Activated naive CD4-positive, alpha-beta T cell treated with anti-CD3 and anti-CD28 coated beads for 36 hours (primary cell): ENCODE measurements at regions of chr13 and their contacts with region 1.

Region 1: GRCh38 chr13:27251166-27252091 is at the start of gene RPL21:
- DNase-seq: peak; percentile 94
- H3K4me3 Mint-ChIP-seq: peak within 1 kb of the TSS; percentile 99
- H3K27ac Mint-ChIP-seq: peak within 1 kb of the TSS; percentile 99
- H3K4me1 Mint-ChIP-seq: peaks cover 43% of the 10 kb centered on the region
- H3K27me3 Mint-ChIP-seq: no peaks in the 10 kb centered on the region
- total RNA-seq, gene RPL21: 1,766 to 1,839 TPM

Region 2: GRCh38 chr13:25301347-25302047 is 1949.9 kb before region 1 on chr13 and contains the start of gene NUP58:
- CTCF ChIA-PET with region 1: no interaction called
- intact Hi-C with region 1: loop called (anchors 5 kb)
- DNase-seq: peak; percentile 96
- H3K4me3 Mint-ChIP-seq: peak within 1 kb of the TSS; percentile 94
- H3K27ac Mint-ChIP-seq: peak within 1 kb of the TSS; percentile 93
- H3K4me1 Mint-ChIP-seq: peaks cover 40% of the 10 kb centered on the region
- H3K27me3 Mint-ChIP-seq: no peaks in the 10 kb centered on the region
- total RNA-seq, gene NUP58: 91.9 to 93.0 TPM

Region 3: GRCh38 chr13:27130979-27131623 is 120.3 kb before region 1 on chr13:
- CTCF ChIA-PET with region 1: no interaction called
- intact Hi-C with region 1: loop called (anchors 1 kb)
- DNase-seq: peak; percentile 89
- H3K4me3 Mint-ChIP-seq: no peak overlapping the region
- H3K27ac Mint-ChIP-seq: peak overlapping the region; percentile 91
- H3K4me1 Mint-ChIP-seq: peaks cover 88% of the 10 kb centered on the region
- H3K27me3 Mint-ChIP-seq: no peaks in the 10 kb centered on the region

Region 4: DNA sequence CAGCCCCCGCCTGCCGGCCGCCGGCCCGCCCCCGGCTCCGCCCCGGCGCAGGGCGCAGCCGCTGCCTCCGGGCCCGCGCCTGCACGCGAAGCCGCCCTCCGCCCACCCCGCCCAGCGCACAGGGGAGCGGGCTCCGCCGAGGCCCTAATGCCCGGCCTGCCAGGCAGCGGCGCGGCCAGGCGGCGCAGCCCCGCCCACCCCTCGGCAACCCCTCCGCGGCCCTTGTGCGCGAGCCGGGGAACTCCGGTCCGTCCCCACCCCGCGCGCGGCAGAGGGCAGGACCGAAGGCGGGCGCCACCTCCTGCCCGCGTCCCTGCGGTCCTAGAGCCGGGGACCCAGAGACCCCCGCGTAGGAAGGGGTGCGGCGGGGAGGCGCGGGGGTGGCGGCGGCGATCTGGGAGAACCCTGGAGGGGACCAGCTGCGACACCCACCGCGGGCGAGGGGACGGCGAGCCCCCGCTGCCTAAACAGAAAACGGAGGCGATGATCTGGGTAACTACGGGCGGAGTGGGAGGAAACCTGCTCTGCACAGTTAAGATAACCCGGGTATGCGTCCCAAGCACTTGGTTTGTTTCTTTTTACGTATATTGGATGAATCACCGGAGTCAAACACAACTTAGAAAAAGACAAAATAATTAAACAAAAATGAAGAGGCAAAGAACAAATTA is 79.5 kb before region 1 on chr13:
- CTCF ChIA-PET with region 1: no interaction called
- intact Hi-C with region 1: loop called (anchors 1 kb)
- DNase-seq: peak; percentile 79
- H3K4me3 Mint-ChIP-seq: peak overlapping the region; percentile 81
- H3K27ac Mint-ChIP-seq: peak overlapping the region; percentile 81
- H3K4me1 Mint-ChIP-seq: peaks cover 61% of the 10 kb centered on the region
- H3K27me3 Mint-ChIP-seq: no peaks in the 10 kb centered on the region

Region 5: GRCh38 chr13:27339299-27339698 is 87.9 kb after region 1 on chr13:
- CTCF ChIA-PET with region 1: interaction called, 3 read pairs
- intact Hi-C with region 1: loop called (anchors 2 kb)
- DNase-seq: peak; percentile 65
- H3K4me3 Mint-ChIP-seq: no peak overlapping the region
- H3K27ac Mint-ChIP-seq: no peak overlapping the region
- H3K4me1 Mint-ChIP-seq: peaks cover 2% of the 10 kb centered on the region
- H3K27me3 Mint-ChIP-seq: no peaks in the 10 kb centered on the region

Region 6: GRCh38 chr13:27449936-27450828 is 198.8 kb after region 1 on chr13 and contains the start of gene MTIF3:
- CTCF ChIA-PET with region 1: no interaction called
- intact Hi-C with region 1: loop called (anchors 1 kb)
- DNase-seq: peak; percentile 97
- H3K4me3 Mint-ChIP-seq: peak within 1 kb of the TSS; percentile 94
- H3K27ac Mint-ChIP-seq: peak within 1 kb of the TSS; percentile 99
- H3K4me1 Mint-ChIP-seq: peaks cover 55% of the 10 kb centered on the region
- H3K27me3 Mint-ChIP-seq: no peaks in the 10 kb centered on the region
- total RNA-seq, gene MTIF3: 34.0 to 42.1 TPM